Endothelial cell of umbilical vein (primary cell): ENCODE measurements at regions of chr4 and their contacts with region 1.

Region 1: GRCh38 chr4:37977471-37978247 is 17.5 kb downstream of the PTTG2 start:
- DNase-seq: peak; percentile 69
- H3K4me3 ChIP-seq: peak overlapping the region; percentile 21 to 77 (median 74)
- H3K27ac ChIP-seq: peak overlapping the region; percentile 83
- H3K4me1 ChIP-seq: peaks cover 13% of the 10 kb centered on the region
- H3K27me3 ChIP-seq: no peaks in the 10 kb centered on the region
- CTCF ChIP-seq: peak; percentile 52 to 82
- POLR2A ChIP-seq: no peak

Region 2: DNA sequence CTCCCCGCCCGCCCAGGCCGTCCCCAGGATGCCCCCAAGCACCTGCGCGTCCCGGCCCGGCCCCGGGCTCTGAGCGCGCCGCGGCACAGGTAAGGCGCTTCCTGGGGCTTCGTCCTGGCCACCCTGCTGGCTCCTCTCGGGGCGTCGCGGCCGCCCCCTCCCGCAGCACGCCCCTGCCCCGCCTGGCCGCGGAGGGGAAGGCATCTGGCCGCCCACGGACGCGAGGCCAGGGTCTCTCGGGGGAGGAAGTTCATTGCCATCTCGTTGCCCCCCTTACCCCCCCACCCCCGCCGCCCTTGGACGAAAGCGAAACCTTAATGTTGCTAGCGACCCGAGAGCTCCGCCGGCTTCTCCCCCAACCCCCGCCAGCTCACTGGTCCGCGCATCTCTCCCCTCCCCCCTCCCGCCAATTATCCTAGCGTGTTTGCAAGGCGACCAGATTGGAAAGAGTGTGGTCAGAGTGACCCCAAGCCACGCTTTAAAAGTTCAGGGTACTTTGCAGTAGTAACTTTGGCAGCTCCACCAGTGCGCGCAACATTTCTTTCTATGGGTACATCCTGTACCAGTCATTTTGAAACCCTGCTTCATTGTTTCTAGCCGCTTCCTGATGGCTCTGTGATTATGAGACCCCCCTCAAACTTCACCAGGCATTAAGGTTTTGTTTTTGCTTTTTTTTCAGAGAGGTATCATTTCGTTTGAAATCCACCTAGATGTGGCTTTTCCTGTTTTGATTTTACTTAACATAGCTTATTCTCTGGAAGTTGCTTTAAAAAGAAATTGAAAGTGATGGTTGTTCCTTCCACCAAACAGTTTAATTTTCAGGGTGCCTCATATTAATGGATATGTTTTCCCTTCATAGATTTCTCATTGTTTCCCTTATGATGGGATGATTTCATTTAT is 86.1 kb before region 1 on chr4:
- CTCF ChIA-PET with region 1: no interaction called
- POLR2A ChIA-PET with region 1: no interaction called
- dilution Hi-C with region 1: no loop called
- intact Hi-C with region 1: loop called (anchors 5 kb)
- DNase-seq: peak; percentile 17
- H3K4me3 ChIP-seq: peak overlapping the region; percentile 44 to 64 (median 48)
- H3K27ac ChIP-seq: no peak overlapping the region
- H3K4me1 ChIP-seq: peaks cover 7% of the 10 kb centered on the region
- H3K27me3 ChIP-seq: peaks cover 30 to 35% of the 10 kb centered on the region in 2 experiments
- CTCF ChIP-seq: peak in 1 of 2 donors; percentile 15
- POLR2A ChIP-seq: no peak